ENCODE measurements at regions of chr2 and their contacts with region 1.

Region 1: GRCh38 chr2:55923091-55923981 is at the start of gene EFEMP1:
- DNase-seq: peak; percentile 83
- H3K4me3 Mint-ChIP-seq: peak within 1 kb of the TSS; percentile 87
- H3K27ac Mint-ChIP-seq: peak within 1 kb of the TSS; percentile 87
- H3K4me1 Mint-ChIP-seq: peaks cover 10% of the 10 kb centered on the region
- H3K27me3 Mint-ChIP-seq: no peaks in the 10 kb centered on the region
- CTCF ChIP-seq: no peak
- total RNA-seq, gene EFEMP1: 125 and 163 TPM in 2 replicates

Region 2: DNA sequence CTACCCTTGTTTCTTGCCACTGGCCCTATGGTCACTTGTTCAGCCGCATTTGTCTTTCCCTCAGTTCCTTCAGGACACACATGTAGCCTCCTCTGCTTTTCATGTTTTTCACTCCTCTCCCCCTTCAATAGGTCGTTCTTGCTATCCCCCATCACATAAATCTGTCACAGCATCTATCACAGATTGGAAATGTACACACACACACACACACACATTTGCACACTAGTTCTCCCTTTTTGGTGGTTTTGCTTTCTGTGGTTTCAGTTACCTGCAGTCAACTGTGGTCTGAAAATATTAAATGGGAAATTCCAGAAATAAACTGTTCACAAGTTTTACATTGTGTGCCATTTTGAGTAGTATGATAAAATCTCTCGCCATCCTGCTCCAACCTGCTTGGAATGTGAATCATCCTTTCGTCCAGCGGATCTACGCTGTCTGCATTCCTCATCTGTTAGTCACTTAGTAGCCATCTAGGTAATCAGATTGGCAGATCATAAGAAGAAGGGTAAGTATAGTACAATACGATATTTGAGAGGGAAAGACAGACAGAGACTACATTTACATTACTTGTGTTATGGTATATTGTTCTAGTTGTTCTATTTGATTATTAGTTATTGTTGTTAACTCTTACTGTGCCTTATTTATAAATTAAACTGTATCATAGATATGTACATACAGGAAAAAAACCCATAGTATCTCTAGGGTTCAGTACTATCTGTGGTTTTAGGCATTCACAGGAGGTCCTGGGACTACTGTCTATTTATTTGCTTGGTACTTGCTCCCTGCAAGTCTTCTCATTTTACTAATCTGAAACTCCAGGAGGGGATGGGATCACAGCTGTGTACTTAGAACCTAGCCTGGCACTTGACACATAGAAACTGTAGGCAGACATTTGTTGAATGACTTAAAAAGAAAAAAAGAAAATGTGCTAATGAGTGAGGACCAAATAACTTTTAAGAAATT is 143.6 kb before region 1 on chr2:
- CTCF ChIA-PET with region 1: no interaction called
- POLR2A ChIA-PET with region 1: interaction called, 7 read pairs
- intact Hi-C with region 1: loop called (anchors 1 kb)
- DNase-seq: peak; percentile 90
- H3K4me3 Mint-ChIP-seq: peak overlapping the region; percentile 41
- H3K27ac Mint-ChIP-seq: peak overlapping the region; percentile 97
- H3K4me1 Mint-ChIP-seq: peaks cover 36% of the 10 kb centered on the region
- H3K27me3 Mint-ChIP-seq: no peaks in the 10 kb centered on the region
- CTCF ChIP-seq: no peak

Region 3: GRCh38 chr2:55885129-55885943 is 38.0 kb before region 1 on chr2:
- CTCF ChIA-PET with region 1: interaction called, 6 read pairs
- POLR2A ChIA-PET with region 1: interaction called, 11 read pairs
- intact Hi-C with region 1: loop called (anchors 2 kb)
- DNase-seq: peak; percentile 91
- H3K4me3 Mint-ChIP-seq: no peak overlapping the region
- H3K27ac Mint-ChIP-seq: peak overlapping the region; percentile 97
- H3K4me1 Mint-ChIP-seq: peaks cover 64% of the 10 kb centered on the region
- H3K27me3 Mint-ChIP-seq: no peaks in the 10 kb centered on the region
- CTCF ChIP-seq: no peak

Region 4: GRCh38 chr2:55901325-55901724 is 22.0 kb before region 1 on chr2:
- CTCF ChIA-PET with region 1: interaction called, 11 read pairs
- POLR2A ChIA-PET with region 1: interaction called, 18 read pairs
- intact Hi-C with region 1: no loop called
- DNase-seq: peak; percentile 70
- H3K4me3 Mint-ChIP-seq: peak overlapping the region; percentile 54
- H3K27ac Mint-ChIP-seq: peak overlapping the region; percentile 98
- H3K4me1 Mint-ChIP-seq: peaks cover 23% of the 10 kb centered on the region
- H3K27me3 Mint-ChIP-seq: no peaks in the 10 kb centered on the region
- CTCF ChIP-seq: no peak

Region 5: DNA sequence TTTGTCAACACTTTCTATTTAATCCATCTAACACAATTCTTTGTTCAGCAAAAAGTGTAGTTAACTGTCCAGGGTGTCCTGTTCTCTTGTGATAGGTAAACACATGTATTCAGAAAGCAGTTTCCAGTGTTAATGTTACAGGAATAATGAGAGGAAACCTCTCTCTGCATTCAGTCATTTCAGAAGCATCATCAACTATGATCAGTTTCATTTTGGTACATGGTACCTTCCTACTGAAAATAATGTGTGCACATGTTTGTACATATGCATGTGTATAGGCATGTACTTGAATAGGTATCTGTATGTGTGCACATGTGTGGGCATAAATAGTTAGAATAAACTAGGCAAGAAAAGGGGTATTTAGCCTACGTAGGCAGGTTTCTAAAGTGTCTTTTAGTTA is 16.3 kb before region 1 on chr2:
- CTCF ChIA-PET with region 1: interaction called, 11 read pairs
- POLR2A ChIA-PET with region 1: interaction called, 18 read pairs
- intact Hi-C with region 1: no loop called
- DNase-seq: no peak
- H3K4me3 Mint-ChIP-seq: no peak overlapping the region
- H3K27ac Mint-ChIP-seq: peak overlapping the region; percentile 35
- H3K4me1 Mint-ChIP-seq: peaks cover 6% of the 10 kb centered on the region
- H3K27me3 Mint-ChIP-seq: no peaks in the 10 kb centered on the region
- CTCF ChIP-seq: no peak

Region 6: DNA sequence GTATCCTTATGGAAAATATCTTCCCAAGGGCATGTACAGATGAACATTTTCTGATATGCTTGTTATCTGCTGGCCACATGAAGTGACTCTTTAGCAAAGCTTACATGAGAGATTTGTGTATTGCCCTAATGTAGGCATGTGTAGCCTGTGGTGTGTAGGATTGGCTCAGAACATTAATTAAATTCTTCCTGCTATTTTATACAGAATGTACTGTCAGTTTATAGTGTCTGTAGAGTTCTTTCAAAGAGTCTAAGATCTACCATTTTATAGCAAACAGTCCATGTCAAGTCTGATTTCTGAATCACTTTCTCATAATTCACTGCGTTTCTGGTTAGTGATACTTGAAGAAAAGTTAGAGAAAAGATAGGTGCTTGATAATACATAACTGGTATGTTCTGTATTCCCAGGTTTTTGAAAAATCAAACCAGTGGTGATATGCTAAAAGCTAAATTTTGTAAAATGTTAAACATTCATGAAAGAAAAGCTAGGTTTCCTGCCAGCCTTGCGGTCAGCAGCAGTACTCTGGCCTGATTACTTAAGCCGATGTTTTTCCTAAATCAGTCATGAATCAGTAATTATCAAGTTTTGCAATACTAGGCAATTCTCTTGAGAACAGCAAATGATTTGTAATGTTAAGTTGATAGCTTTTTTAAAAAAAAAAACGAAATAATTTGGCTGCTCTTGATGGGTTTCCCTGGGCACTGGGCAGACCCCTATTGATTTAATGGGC is 31.1 kb after region 1 on chr2:
- CTCF ChIA-PET with region 1: interaction called, 45 read pairs
- POLR2A ChIA-PET with region 1: interaction called, 62 read pairs
- intact Hi-C with region 1: no loop called
- DNase-seq: peak; percentile 69
- H3K4me3 Mint-ChIP-seq: no peak overlapping the region
- H3K27ac Mint-ChIP-seq: no peak overlapping the region
- H3K4me1 Mint-ChIP-seq: peaks cover 20% of the 10 kb centered on the region
- H3K27me3 Mint-ChIP-seq: no peaks in the 10 kb centered on the region
- CTCF ChIP-seq: no peak

Region 7: DNA sequence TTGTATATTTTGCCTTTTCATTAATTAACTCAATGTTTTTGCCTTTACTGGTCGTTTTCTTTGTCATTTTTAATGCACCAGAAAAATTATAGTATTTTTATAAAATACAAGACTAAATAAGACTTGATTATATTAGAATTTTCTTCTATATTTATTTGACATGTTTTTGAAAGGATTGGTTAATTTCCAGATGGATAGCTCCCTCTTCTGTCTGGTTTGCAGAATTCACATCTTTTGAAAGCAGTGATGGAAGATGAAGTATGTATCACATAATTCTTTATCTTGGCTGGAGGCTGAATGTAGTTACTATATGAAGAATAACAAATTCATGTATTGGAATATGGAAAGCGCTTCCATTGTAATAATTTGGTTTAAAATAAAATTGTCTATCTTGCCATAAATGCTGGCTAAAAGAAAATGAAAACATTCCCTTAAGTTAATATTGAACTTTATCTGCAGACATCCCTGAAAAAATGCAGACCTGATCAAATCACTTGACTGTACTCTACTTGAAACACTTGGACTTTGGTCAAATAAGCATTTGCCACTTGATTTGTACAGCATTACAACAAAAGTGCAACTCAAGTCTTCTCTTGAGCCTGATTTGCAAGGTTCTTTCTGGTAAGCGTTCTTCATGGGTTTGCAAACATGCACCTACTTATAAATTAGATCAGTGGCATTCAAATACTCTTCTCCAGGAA is 86.6 kb after region 1 on chr2:
- CTCF ChIA-PET with region 1: interaction called, 5 read pairs
- POLR2A ChIA-PET with region 1: no interaction called
- intact Hi-C with region 1: loop called (anchors 5 kb)
- DNase-seq: peak; percentile 60
- H3K4me3 Mint-ChIP-seq: no peak overlapping the region
- H3K27ac Mint-ChIP-seq: no peak overlapping the region
- H3K4me1 Mint-ChIP-seq: peaks cover 5% of the 10 kb centered on the region
- H3K27me3 Mint-ChIP-seq: no peaks in the 10 kb centered on the region
- CTCF ChIP-seq: peak; percentile 68